Heart right ventricle (tissue), 16 donors: ENCODE measurements at regions of chr6 and their contacts with region 1.

Region 1: GRCh38 chr6:141610736-141611135 is 522.0 kb upstream of the GJE1 start:
- DNase-seq: no peak
- ATAC-seq: no peak
- H3K4me3 ChIP-seq: no peak overlapping the region
- H3K27ac ChIP-seq: no peak overlapping the region
- H3K4me1 ChIP-seq: no peaks in the 10 kb centered on the region
- H3K27me3 ChIP-seq: no peaks in the 10 kb centered on the region
- CTCF ChIP-seq: no peak

Region 2: GRCh38 chr6:141634269-141634668 is 23.5 kb after region 1 on chr6:
- intact Hi-C with region 1: loop called in 1 of 10 experiments (anchors 2 kb)
- DNase-seq: no peak
- ATAC-seq: no peak
- H3K4me3 ChIP-seq: no peak overlapping the region
- H3K27ac ChIP-seq: no peak overlapping the region
- H3K4me1 ChIP-seq: no peaks in the 10 kb centered on the region
- H3K27me3 ChIP-seq: no peaks in the 10 kb centered on the region
- CTCF ChIP-seq: no peak

Region 3: GRCh38 chr6:141677598-141678211 is 67.0 kb after region 1 on chr6:
- intact Hi-C with region 1: no loop called
- DNase-seq: no peak
- ATAC-seq: no peak
- H3K4me3 ChIP-seq: no peak overlapping the region
- H3K27ac ChIP-seq: no peak overlapping the region
- H3K4me1 ChIP-seq: no peaks in the 10 kb centered on the region
- H3K27me3 ChIP-seq: no peaks in the 10 kb centered on the region
- CTCF ChIP-seq: peak in 8 of 9 donors; percentile 33 to 64 (median 57)